ENCODE measurements at regions of chr9 and their contacts with region 1.

Region 1: DNA sequence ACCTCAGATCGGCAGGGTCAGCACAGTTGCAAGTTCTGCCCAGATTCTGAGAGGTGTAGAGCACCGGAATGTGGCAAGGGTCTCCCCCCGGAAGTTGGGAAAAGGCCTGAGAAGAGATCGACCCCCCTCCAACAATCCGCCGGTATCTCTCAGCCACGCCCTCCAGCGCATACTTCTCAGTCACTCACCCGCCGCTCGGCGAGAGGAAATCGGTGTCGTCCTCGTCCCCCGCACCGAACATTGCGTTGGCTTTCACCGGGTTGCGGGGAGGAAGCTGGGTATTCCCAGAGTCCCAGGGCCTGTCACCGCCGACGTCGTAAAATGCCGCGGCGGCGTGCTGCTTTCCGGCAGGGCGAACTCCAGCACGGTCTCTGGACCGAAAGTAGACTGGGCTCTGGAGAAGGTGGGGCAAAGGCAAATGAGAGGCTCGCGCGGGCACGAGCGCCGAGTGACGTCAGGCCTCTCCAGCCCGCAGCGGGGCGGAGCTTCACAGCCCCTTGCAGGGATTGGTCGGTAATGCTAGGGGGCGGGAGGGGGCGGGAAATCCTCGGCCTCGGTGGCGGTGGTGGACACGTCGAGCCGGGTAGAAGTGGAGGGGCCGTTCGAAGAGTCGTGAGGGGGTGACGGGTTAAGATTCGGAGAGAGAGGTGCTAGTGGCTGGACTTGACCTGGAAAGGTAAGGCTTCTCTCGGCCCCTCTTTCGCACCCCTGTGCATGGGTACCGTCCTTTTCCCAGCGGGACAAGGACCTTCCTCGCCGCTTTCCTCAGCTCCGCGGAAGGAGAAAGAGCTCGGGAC is at the starts of genes FKBP15 and SLC31A1:
- DNase-seq: peak; percentile 96
- H3K4me3 ChIP-seq: peak within 1 kb of the TSS; percentile 96 to 98
- H3K27ac ChIP-seq: peak within 1 kb of the TSS; percentile 70 to 80
- H3K4me1 ChIP-seq: peaks cover 16 to 17% of the 10 kb centered on the region in 2 experiments
- H3K27me3 ChIP-seq: no peaks in the 10 kb centered on the region
- CTCF ChIP-seq: no peak
- EP300 ChIP-seq: no peak
- RAD21 ChIP-seq: 0 out of 2 replicates have a peak, but pooled peaks have one; percentile 4
- polyA plus RNA-seq, gene FKBP15: 13.9 and 17.6 TPM in 2 replicates
- polyA plus RNA-seq, gene SLC31A1: 7.7 and 11.2 TPM in 2 replicates

Region 2: GRCh38 chr9:113178087-113178486 is 43.1 kb before region 1 on chr9:
- CTCF ChIA-PET with region 1: no interaction called
- POLR2A ChIA-PET with region 1: no interaction called
- DNase-seq: no peak
- H3K4me3 ChIP-seq: no peak overlapping the region
- H3K27ac ChIP-seq: peak overlapping the region in 1 of 2 experiments; percentile 16; a peak in 1 of 4 replicates
- H3K4me1 ChIP-seq: no peaks in the 10 kb centered on the region
- H3K27me3 ChIP-seq: no peaks in the 10 kb centered on the region
- CTCF ChIP-seq: no peak
- EP300 ChIP-seq: no peak
- RAD21 ChIP-seq: no peak

Region 3: DNA sequence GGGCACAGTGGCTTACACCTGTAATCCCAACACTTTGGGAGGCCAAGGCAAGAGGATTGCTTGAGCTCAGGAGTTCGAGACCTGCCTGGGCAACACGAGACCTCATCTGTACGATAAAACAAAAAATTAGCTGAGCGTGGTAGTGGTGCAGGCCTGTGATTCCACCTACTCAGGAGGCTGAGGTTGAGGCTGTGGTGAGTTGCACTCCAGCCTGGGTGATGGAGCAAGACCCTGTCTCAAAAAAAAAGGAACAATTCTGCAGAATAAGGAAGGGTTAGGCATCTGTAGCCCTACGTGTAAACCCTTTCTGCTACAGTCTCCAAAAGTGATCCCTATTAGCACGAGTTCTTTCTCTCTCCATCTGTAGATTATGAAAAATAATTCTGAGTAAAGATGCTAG is 34.2 kb after region 1 on chr9:
- CTCF ChIA-PET with region 1: interaction called, 3 read pairs
- POLR2A ChIA-PET with region 1: interaction called, 15 read pairs
- DNase-seq: no peak
- H3K4me3 ChIP-seq: no peak overlapping the region
- H3K27ac ChIP-seq: peak overlapping the region in 1 of 2 experiments; percentile 91; a peak in 2 of 4 replicates
- H3K4me1 ChIP-seq: peaks cover 0 to 15% of the 10 kb centered on the region in 2 experiments; a peak in 1 of 4 replicates
- H3K27me3 ChIP-seq: no peaks in the 10 kb centered on the region
- CTCF ChIP-seq: no peak
- EP300 ChIP-seq: no peak
- RAD21 ChIP-seq: no peak